Caco-2 (cell line): ENCODE measurements at regions of chr2 and their contacts with region 1.

Region 1: GRCh38 chr2:62334440-62335058 is 138.6 kb downstream of the B3GNT2 start:
- DNase-seq: no peak
- H3K4me3 ChIP-seq: no peak overlapping the region
- H3K4me3 Mint-ChIP-seq: no peak overlapping the region
- H3K27ac Mint-ChIP-seq: peak overlapping the region; percentile 53
- H3K4me1 ChIP-seq: peaks cover 49% of the 10 kb centered on the region
- H3K4me1 Mint-ChIP-seq: peaks cover 49% of the 10 kb centered on the region
- H3K27me3 ChIP-seq: no peaks in the 10 kb centered on the region
- H3K27me3 Mint-ChIP-seq: no peaks in the 10 kb centered on the region
- CTCF ChIP-seq: no peak

Region 2: GRCh38 chr2:62227386-62228075 is 107.0 kb before region 1 on chr2:
- CTCF ChIA-PET with region 1: no interaction called
- POLR2A ChIA-PET with region 1: interaction called, 3 read pairs
- intact Hi-C with region 1: loop called (anchors 5 kb)
- DNase-seq: no peak
- H3K4me3 ChIP-seq: no peak overlapping the region
- H3K4me3 Mint-ChIP-seq: no peak overlapping the region
- H3K27ac Mint-ChIP-seq: no peak overlapping the region
- H3K4me1 ChIP-seq: peaks cover 18% of the 10 kb centered on the region
- H3K4me1 Mint-ChIP-seq: peaks cover 15% of the 10 kb centered on the region
- H3K27me3 ChIP-seq: no peaks in the 10 kb centered on the region
- H3K27me3 Mint-ChIP-seq: no peaks in the 10 kb centered on the region
- CTCF ChIP-seq: no peak

Region 3: GRCh38 chr2:62284980-62285379 is 49.6 kb before region 1 on chr2:
- CTCF ChIA-PET with region 1: no interaction called
- POLR2A ChIA-PET with region 1: no interaction called
- intact Hi-C with region 1: no loop called
- DNase-seq: no peak
- H3K4me3 ChIP-seq: no peak overlapping the region
- H3K4me3 Mint-ChIP-seq: no peak overlapping the region
- H3K27ac Mint-ChIP-seq: no peak overlapping the region
- H3K4me1 ChIP-seq: no peaks in the 10 kb centered on the region
- H3K4me1 Mint-ChIP-seq: no peaks in the 10 kb centered on the region
- H3K27me3 ChIP-seq: no peaks in the 10 kb centered on the region
- H3K27me3 Mint-ChIP-seq: no peaks in the 10 kb centered on the region
- CTCF ChIP-seq: no peak

Region 4: DNA sequence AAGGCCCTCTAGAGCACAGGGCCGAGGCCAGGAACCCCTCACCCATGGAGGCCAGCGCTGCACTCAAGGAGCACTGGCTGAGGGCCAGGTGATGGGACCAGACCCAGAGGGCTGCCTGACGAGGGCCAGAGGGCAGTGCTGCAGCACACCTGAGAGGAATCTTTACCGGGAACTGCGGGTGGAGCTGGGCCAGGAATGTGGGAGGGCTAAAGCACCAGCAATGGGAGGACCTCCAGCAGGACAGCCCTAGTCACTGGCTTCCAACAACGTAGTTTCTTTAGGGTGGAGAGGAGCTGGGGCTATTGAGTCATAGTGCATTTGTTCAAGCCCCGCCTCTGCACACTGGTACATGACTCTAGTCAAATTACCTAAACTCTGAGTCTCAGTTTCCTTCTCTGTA is 28.0 kb after region 1 on chr2:
- CTCF ChIA-PET with region 1: no interaction called
- POLR2A ChIA-PET with region 1: no interaction called
- intact Hi-C with region 1: no loop called
- DNase-seq: peak; percentile 73 to 85
- H3K4me3 ChIP-seq: no peak overlapping the region
- H3K4me3 Mint-ChIP-seq: no peak overlapping the region
- H3K27ac Mint-ChIP-seq: peak overlapping the region; percentile 54
- H3K4me1 ChIP-seq: peaks cover 19% of the 10 kb centered on the region
- H3K4me1 Mint-ChIP-seq: peaks cover 11% of the 10 kb centered on the region
- H3K27me3 ChIP-seq: no peaks in the 10 kb centered on the region
- H3K27me3 Mint-ChIP-seq: no peaks in the 10 kb centered on the region
- CTCF ChIP-seq: no peak